Activated naive CD4-positive, alpha-beta T cell treated with anti-CD3 and anti-CD28 coated beads for 36 hours (primary cell): ENCODE measurements at regions of chr2 and their contacts with region 1.

Region 1: DNA sequence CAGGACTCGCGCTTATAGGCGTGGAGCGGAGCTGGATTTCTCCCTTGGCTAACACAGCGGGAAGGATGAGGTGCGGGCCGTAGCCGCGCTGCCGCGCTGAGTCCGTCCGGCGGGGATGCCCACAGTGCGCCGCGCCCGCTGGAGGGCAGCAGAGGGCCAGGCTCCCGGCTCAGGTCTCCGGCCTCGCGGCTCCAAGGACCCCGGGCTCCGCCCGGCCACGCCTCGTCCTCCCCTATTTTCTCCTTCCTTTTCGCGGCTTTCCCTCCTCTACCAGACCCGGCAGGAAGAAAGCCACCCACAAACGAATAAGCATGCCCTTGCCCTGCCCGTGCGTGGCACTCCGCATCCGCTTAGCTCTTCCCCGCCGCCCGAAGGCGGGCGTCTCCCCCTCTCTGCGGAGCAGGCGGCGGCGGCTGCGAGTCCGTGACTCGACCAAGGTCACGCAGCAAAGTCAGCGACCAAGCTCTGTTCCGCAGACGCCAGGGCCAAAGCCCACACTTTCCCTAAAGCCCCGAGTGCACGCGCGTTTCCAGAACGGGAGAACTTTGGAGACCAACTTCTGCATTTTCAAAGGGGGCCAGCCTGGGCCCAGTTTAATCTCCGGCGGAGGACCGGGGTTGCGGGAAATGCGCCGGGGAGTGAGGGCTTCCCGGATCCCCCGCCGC is 48.6 kb downstream of the KCNIP3 start:
- DNase-seq: peak; percentile 72
- H3K4me3 Mint-ChIP-seq: peak overlapping the region; percentile 71
- H3K27ac Mint-ChIP-seq: no peak overlapping the region
- H3K4me1 Mint-ChIP-seq: peaks cover 3% of the 10 kb centered on the region
- H3K27me3 Mint-ChIP-seq: peaks cover 42% of the 10 kb centered on the region

Region 2: DNA sequence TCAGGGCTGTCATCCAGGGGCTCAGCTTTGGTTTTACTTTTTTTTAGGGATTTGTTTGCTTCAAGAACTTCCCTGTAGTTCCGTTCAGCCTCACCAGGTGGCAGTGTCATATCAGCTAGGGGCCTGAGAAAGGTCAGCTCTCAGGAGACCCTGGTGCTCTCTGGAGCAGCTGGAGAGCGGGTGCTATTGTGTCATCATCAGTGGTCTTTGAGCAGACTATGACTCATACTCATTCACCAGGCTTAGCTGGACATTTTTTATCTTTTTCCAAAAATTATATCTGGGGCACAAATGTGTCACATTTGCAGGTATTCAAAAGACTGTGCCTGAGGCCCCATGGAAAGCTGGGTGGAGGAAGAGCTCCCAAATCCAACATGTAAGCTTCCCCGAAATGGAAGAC is 114.0 kb before region 1 on chr2:
- CTCF ChIA-PET with region 1: interaction called, 11 read pairs
- intact Hi-C with region 1: no loop called
- DNase-seq: peak; percentile 57
- H3K4me3 Mint-ChIP-seq: no peak overlapping the region
- H3K27ac Mint-ChIP-seq: no peak overlapping the region
- H3K4me1 Mint-ChIP-seq: no peaks in the 10 kb centered on the region
- H3K27me3 Mint-ChIP-seq: no peaks in the 10 kb centered on the region

Region 3: DNA sequence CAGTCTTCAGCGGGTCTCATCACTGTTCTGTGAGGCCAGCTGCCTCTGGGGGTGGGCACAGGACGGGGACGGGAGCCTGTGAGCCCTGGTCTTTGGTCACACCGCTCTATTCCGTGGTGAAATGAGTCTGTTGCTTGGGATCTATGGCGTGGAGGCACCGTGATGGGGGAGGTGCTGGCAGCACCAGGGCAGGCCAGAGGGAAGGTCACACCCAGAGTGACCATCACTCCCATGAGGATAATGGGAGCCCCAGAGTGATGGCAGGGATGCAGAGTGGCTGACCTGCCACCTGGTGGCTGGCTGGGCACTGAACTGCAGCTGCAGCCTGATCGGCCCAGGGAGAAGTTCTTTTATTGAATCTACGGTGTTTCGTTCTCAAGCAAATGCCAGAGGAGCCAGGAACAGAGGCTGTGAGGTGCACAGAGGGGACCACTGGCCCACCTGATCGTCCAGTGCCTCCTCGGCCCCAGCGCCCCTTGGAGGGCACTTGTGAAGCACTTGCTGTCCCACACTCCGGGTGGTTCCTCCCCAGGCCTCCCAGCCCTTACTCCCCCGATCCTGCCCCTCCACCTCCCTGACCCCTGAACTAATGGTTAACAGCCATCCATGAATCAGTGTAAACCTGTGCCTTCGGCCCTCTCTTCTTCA is 30.6 kb before region 1 on chr2:
- CTCF ChIA-PET with region 1: no interaction called
- intact Hi-C with region 1: no loop called
- DNase-seq: peak; percentile 17
- H3K4me3 Mint-ChIP-seq: no peak overlapping the region
- H3K27ac Mint-ChIP-seq: no peak overlapping the region
- H3K4me1 Mint-ChIP-seq: no peaks in the 10 kb centered on the region
- H3K27me3 Mint-ChIP-seq: peaks cover 2% of the 10 kb centered on the region

Region 4: DNA sequence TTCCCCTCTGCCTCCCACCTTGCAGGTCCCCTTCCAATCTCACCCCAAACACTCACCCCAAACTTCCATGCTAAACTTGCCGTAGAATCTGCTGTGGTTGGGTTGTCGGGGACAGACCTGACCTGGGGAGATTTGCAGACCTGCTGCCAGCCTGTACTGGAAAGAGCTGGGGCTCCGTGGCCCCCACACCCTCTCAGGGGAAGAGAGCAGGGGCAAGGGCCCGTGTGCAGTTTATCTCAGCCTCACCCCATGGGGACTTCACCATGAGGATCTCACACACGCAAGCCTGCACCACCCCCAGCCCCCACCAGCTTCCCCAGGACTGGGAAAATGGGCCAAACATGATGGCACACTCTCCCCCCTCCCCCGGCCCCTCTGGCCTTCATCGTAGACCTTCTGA is 17.8 kb before region 1 on chr2:
- CTCF ChIA-PET with region 1: no interaction called
- intact Hi-C with region 1: no loop called
- DNase-seq: no peak
- H3K4me3 Mint-ChIP-seq: no peak overlapping the region
- H3K27ac Mint-ChIP-seq: no peak overlapping the region
- H3K4me1 Mint-ChIP-seq: no peaks in the 10 kb centered on the region
- H3K27me3 Mint-ChIP-seq: no peaks in the 10 kb centered on the region